HepG2 (cell line): ENCODE measurements at regions of chr17 and their contacts with region 1.

Region 1: GRCh38 chr17:1769822-1770477 is 8.1 kb downstream of the SERPINF1 start:
- DNase-seq: peak; percentile 95
- ATAC-seq: peak; percentile 89
- H3K4me3 ChIP-seq: peak overlapping the region in 1 of 3 experiments; percentile 14; a peak in 1 of 6 replicates
- H3K27ac ChIP-seq: peak overlapping the region; percentile 83
- H3K4me1 ChIP-seq: peaks cover 55% of the 10 kb centered on the region
- H3K27me3 ChIP-seq: no peaks in the 10 kb centered on the region
- CTCF ChIP-seq: peak; percentile 48
- EP300 ChIP-seq: peak in 1 of 2 experiments; percentile 52; a peak in 1 of 4 replicates
- POLR2A ChIP-seq: no peak; a peak in 1 of 4 replicates
- RAD21 ChIP-seq: peak; percentile 32; the same call in 1 of the 2 replicates

Region 2: DNA sequence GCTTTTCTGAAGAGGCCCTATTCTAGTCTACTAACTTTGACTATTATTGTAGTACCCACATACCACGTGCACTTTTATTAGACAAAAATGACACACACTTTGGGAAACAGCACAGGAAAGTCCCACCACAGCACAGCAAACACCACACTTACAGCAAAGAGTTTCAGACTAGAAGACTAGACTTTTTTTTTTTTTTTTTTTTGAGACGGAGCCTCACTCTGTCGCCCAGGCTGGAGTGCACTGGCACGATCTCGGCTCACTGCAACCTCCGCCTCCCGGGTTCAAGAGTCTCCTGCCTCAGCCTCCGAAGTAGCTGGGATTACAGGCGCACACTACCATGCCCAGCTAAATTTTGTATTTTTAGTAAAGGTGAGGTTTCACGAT is 390.0 kb before region 1 on chr17:
- CTCF ChIA-PET with region 1: no interaction called
- POLR2A ChIA-PET with region 1: no interaction called
- in situ Hi-C with region 1: no loop called
- intact Hi-C with region 1: no loop called
- DNase-seq: no peak
- ATAC-seq: no peak
- H3K4me3 ChIP-seq: no peak overlapping the region
- H3K27ac ChIP-seq: no peak overlapping the region
- H3K4me1 ChIP-seq: peaks cover 54% of the 10 kb centered on the region
- H3K27me3 ChIP-seq: no peaks in the 10 kb centered on the region
- CTCF ChIP-seq: no peak
- EP300 ChIP-seq: no peak
- POLR2A ChIP-seq: no peak
- RAD21 ChIP-seq: no peak

Region 3: GRCh38 chr17:1573916-1574696 is 195.8 kb before region 1 on chr17:
- CTCF ChIA-PET with region 1: no interaction called
- POLR2A ChIA-PET with region 1: no interaction called
- in situ Hi-C with region 1: no loop called
- intact Hi-C with region 1: no loop called
- DNase-seq: peak; percentile 63
- ATAC-seq: peak; percentile 70
- H3K4me3 ChIP-seq: no peak overlapping the region
- H3K27ac ChIP-seq: no peak overlapping the region
- H3K4me1 ChIP-seq: peaks cover 56% of the 10 kb centered on the region
- H3K27me3 ChIP-seq: peaks cover 10 to 12% of the 10 kb centered on the region in 2 experiments; a peak in 3 of 5 replicates
- CTCF ChIP-seq: peak; percentile 96
- EP300 ChIP-seq: peak in 1 of 2 experiments; percentile 30; a peak in 1 of 4 replicates
- POLR2A ChIP-seq: no peak
- RAD21 ChIP-seq: peak; percentile 97

Region 4: DNA sequence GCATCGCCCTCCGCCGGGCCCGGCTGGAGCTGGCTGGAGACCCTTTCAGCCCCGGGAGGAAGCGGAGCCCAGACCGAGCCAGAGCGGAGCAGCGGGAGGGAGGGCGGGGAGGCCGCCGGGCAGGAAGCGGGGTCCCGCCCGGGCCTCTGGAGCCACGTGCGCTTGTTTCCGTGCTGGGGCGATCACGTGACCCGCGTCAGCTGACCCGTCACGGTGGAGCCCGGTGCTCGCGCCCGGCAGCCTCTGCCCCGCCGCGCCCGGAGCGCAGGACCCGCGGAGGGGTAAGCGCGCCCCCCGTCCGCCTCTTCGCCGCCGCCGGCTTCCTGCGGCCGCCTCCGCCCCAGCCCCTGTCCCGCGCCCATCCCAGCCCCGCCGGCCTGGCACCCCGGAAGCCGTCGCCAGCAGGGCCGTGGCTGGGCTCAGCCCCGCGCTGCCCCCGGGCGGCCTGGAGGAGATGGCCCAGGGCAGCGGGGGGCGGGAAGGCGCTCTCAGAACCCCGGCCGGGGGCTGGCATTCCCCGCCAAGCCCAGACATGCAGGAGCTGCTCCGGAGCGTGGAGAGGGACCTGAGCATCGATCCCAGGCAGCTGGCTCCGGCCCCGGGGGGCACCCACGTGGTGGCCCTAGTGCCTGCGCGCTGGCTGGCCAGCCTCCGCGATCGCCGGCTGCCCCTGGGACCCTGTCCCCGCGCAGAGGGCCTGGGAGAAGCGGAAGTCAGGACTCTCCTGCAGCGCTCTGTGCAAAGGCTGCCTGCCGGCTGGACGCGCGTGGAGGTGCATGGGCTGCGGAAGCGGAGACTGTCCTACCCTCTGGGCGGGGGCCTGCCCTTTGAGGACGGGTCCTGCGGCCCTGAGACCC is 45.2 kb before region 1 on chr17 and contains the start of gene WDR81:
- CTCF ChIA-PET with region 1: no interaction called
- POLR2A ChIA-PET with region 1: interaction called, 110 read pairs
- in situ Hi-C with region 1: loop called (anchors 5 kb)
- intact Hi-C with region 1: no loop called
- DNase-seq: peak; percentile 72
- ATAC-seq: peak; percentile 79
- H3K4me3 ChIP-seq: peak within 1 kb of the TSS; percentile 62 to 78 (median 64)
- H3K27ac ChIP-seq: peak within 1 kb of the TSS; percentile 77
- H3K4me1 ChIP-seq: peaks cover 72% of the 10 kb centered on the region
- H3K27me3 ChIP-seq: no peaks in the 10 kb centered on the region
- CTCF ChIP-seq: peak; percentile 32
- EP300 ChIP-seq: peak in 1 of 2 experiments; percentile 38; a peak in 1 of 4 replicates
- POLR2A ChIP-seq: peak in 1 of 2 experiments; percentile 46; a peak in 1 of 4 replicates
- RAD21 ChIP-seq: peak; percentile 42
- total RNA-seq, gene WDR81: 12.5 and 16.7 TPM in 2 replicates

Region 5: DNA sequence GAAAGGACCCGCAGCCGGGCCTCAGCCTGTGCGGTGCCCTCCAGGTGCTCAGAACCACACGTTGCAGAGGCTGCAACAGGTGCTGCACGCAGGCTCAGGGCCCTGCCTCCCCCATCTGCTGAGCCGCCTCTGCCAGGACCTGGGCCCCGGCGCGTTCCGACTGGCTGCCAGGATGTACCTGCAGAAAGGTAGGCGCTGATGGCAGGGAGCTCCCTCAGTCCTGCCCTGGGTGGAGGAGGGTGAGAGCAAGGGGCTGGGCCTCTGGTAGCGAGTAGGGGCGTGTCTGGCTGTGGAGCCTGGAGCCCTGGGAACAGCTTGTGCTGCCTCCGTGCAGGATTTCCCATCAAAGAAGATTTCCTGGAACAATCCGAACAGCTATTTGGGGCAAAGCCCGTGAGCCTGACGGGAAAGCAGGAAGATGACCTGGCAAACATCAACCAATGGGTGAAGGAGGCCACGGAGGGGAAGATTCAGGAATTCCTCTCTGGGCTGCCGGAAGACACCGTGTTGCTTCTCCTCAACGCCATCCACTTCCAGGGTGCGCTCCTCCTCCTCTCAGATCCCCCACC is 22.9 kb before region 1 on chr17:
- CTCF ChIA-PET with region 1: no interaction called
- POLR2A ChIA-PET with region 1: interaction called, 150 read pairs
- in situ Hi-C with region 1: no loop called
- intact Hi-C with region 1: no loop called
- DNase-seq: no peak
- ATAC-seq: no peak
- H3K4me3 ChIP-seq: no peak overlapping the region
- H3K27ac ChIP-seq: peak overlapping the region; percentile 11
- H3K4me1 ChIP-seq: peaks cover 60% of the 10 kb centered on the region
- H3K27me3 ChIP-seq: no peaks in the 10 kb centered on the region
- CTCF ChIP-seq: no peak
- EP300 ChIP-seq: no peak
- POLR2A ChIP-seq: peak in 1 of 2 experiments; percentile 20; a peak in 1 of 4 replicates
- RAD21 ChIP-seq: no peak

Region 6: GRCh38 chr17:1783834-1784611 is 14.1 kb after region 1 on chr17:
- CTCF ChIA-PET with region 1: no interaction called
- POLR2A ChIA-PET with region 1: interaction called, 13 read pairs
- in situ Hi-C with region 1: no loop called
- intact Hi-C with region 1: no loop called
- DNase-seq: peak; percentile 67
- ATAC-seq: peak; percentile 87
- H3K4me3 ChIP-seq: no peak overlapping the region
- H3K27ac ChIP-seq: no peak overlapping the region
- H3K4me1 ChIP-seq: peaks cover 7% of the 10 kb centered on the region
- H3K27me3 ChIP-seq: no peaks in the 10 kb centered on the region
- CTCF ChIP-seq: peak; percentile 83
- EP300 ChIP-seq: no peak
- POLR2A ChIP-seq: no peak
- RAD21 ChIP-seq: peak; percentile 84

Region 7: DNA sequence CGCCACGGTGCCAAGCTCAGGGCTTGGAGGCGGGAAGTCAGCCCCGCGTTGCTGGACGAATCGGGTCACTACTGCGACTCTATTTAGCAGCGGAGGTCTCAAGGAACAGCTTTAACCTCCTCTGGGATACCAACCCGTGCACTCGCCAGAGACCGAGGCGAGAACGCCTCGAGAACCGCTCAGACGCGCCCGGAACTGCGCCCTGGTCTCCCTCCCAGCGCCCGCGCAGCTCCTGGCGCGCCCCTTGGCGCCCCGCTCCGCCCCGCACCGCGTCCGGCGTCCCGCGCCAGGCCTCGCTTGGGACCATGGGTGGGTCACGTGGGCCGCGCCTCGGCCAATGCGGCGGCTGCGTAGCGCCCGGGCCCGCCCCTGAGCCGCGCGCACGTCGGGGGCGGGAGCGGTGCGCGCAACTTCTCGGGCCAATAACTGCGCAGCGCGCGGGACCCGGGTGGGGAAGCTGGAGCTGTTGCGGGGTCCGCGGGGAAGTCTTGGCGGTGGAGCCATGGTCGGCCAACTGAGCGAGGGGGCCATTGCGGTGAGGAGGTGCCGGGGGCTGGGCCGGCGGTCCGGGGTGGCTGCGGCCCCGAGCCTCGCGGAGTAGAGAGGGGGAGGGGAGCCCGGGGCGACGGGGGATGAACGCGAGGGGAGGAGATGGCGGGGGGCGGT is 59.8 kb after region 1 on chr17 and contains the starts of genes RPA1 and SMYD4:
- CTCF ChIA-PET with region 1: no interaction called
- POLR2A ChIA-PET with region 1: interaction called, 11 read pairs
- in situ Hi-C with region 1: no loop called
- intact Hi-C with region 1: no loop called
- DNase-seq: peak; percentile 75
- ATAC-seq: peak; percentile 100
- H3K4me3 ChIP-seq: peak within 1 kb of the TSS; percentile 66 to 88 (median 84)
- H3K27ac ChIP-seq: peak within 1 kb of the TSS; percentile 73
- H3K4me1 ChIP-seq: peaks cover 29% of the 10 kb centered on the region
- H3K27me3 ChIP-seq: no peaks in the 10 kb centered on the region; a peak in 1 of 5 replicates
- CTCF ChIP-seq: peak; percentile 7; the same call in 1 of the 2 replicates
- EP300 ChIP-seq: no peak; a peak in 1 of 4 replicates
- POLR2A ChIP-seq: peak; percentile 74 to 93
- RAD21 ChIP-seq: peak; percentile 20; the same call in 1 of the 2 replicates
- total RNA-seq, gene RPA1: 13.9 and 53.3 TPM in 2 replicates
- total RNA-seq, gene SMYD4: 9.8 and 11.3 TPM in 2 replicates

Region 8: DNA sequence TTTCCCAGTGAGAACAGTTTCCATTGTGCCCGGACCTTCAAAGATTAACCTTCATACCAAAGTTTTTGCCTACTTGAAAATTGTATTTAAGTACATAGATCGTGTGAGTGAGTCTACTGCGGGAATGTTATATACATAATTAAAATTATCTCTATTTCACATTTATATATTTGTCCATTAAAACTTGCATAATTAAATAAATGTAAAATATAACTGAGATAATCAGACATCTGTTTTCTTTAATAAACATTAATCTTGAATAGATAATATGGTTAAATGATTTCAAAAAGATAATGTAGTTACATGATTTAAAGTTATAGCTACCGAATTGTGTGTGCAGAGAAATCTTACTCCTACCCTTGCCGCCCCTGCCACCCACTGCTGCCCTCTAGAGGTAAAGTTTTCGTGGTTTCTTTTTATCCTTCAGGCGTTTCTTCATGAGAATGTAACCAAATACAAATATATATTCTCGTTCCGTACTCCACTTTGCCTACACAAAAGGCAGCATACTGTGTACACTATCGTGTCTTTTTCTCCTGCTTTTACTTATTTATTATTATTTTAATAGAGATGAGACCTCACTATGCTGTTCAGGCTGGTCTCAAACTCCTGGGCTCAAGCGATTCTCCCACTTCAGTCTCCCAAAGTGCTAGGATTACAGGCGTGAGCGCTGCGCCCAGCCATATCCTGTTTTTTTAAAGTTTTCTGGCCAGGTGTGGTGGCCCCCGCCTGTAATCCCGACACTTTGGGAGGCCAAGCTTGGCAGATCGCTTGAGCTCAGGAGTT is 95.5 kb after region 1 on chr17:
- CTCF ChIA-PET with region 1: no interaction called
- POLR2A ChIA-PET with region 1: no interaction called
- in situ Hi-C with region 1: no loop called
- intact Hi-C with region 1: no loop called
- DNase-seq: peak; percentile 35
- ATAC-seq: no peak
- H3K4me3 ChIP-seq: no peak overlapping the region
- H3K27ac ChIP-seq: no peak overlapping the region
- H3K4me1 ChIP-seq: no peaks in the 10 kb centered on the region
- H3K27me3 ChIP-seq: no peaks in the 10 kb centered on the region
- CTCF ChIP-seq: peak; percentile 56
- EP300 ChIP-seq: no peak
- POLR2A ChIP-seq: no peak
- RAD21 ChIP-seq: peak; percentile 46